ENCODE measurements at regions of chr19 and their contacts with region 1.

Region 1: DNA sequence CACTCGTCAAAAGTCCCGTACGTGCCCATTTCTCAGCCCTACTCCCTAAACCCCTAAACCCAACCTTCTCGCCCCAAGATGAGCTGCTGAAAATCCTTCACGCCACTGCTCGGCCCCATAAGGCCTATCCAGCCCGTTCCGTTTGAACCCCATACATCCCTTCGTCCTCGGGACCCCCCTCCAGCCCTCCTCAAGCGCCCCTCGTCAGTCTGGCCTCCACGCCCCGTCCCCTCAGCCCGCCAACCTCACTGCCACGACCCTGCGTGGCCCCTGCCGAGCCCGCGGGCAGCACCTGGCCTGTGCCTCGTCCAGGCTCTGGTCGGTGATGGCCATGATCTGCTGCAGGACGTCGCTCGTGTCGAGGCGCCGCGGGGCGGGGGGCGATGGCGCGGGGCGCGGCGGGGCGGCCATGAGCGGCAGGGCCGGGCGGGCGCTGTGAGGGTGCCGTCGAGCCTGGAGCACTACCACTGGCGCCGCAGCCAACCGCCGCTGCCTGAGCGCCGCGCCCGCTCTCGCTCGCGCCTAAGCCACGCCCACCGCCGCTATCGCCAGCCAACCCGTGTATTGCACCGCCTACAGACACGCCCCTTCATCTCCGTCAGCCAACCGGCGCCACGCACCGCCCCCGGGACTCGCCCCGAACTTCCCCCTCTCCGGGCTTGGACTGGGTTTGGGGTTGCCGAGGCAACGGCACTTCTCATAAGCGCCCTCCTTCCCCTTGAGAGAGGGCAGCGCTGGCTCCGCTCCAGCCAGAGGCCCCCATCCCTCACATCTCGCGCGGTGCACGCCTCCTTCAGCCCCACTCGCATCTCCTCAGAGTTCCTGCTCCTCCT is at the start of gene PBX4:
- DNase-seq: peak; percentile 99
- H3K4me3 Mint-ChIP-seq: peak within 1 kb of the TSS; percentile 94
- H3K27ac Mint-ChIP-seq: peak within 1 kb of the TSS; percentile 81
- H3K4me1 Mint-ChIP-seq: peaks cover 43% of the 10 kb centered on the region
- H3K27me3 Mint-ChIP-seq: no peaks in the 10 kb centered on the region
- total RNA-seq, gene PBX4: 44.9 to 45.7 TPM

Region 2: DNA sequence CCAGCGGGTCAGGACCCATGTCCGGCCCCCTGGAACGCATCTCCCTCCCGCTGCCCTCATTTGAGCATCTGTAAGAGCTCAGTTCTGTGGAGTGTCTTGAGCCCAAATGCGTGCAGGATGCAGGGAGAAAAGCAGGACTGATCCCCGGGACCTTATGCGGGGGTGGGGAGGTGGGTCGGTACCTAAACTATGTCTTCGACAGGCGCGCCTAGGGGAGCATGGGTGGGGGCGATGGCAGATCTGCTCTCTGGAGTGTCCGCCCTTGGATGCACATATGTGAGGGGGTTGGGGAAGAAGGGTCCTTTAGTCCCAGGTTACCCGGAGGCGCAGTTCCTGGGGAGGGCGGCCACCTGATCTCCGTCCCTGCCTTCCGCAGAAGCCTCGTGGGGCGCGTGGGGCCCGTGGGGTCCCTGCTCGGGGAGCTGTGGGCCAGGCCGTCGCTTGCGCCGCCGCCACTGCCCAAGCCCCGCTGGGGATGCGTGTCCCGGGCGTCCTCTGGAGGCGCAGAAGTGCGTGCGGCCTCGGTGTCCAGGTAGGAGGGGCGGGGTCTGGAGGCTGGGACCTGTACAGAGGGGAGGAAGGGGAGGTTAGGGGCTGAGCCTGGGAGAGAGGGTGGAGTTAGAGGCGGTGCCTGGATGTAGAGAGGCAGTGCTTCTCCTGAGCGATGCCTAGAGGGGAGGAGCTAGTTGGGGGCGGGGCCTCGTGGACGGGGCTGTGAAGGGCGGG is 77.6 kb before region 1 on chr19:
- CTCF ChIA-PET with region 1: no interaction called
- POLR2A ChIA-PET with region 1: no interaction called
- intact Hi-C with region 1: loop called (anchors 2 kb)
- DNase-seq: peak; percentile 91
- H3K4me3 Mint-ChIP-seq: peak overlapping the region; percentile 70
- H3K27ac Mint-ChIP-seq: no peak overlapping the region
- H3K4me1 Mint-ChIP-seq: peaks cover 26% of the 10 kb centered on the region
- H3K27me3 Mint-ChIP-seq: peaks cover 5% of the 10 kb centered on the region

Region 3: GRCh38 chr19:19591133-19591825 is 27.2 kb before region 1 on chr19:
- CTCF ChIA-PET with region 1: interaction called, 5 read pairs
- POLR2A ChIA-PET with region 1: interaction called, 5 read pairs
- intact Hi-C with region 1: loop called (anchors 2 kb)
- DNase-seq: peak; percentile 89
- H3K4me3 Mint-ChIP-seq: peak overlapping the region; percentile 60
- H3K27ac Mint-ChIP-seq: peak overlapping the region; percentile 100
- H3K4me1 Mint-ChIP-seq: peaks cover 72% of the 10 kb centered on the region
- H3K27me3 Mint-ChIP-seq: no peaks in the 10 kb centered on the region

Region 4: GRCh38 chr19:19597809-19598306 is 20.6 kb before region 1 on chr19:
- CTCF ChIA-PET with region 1: no interaction called
- POLR2A ChIA-PET with region 1: interaction called, 9 read pairs
- intact Hi-C with region 1: loop called (anchors 1 kb)
- DNase-seq: peak; percentile 74
- H3K4me3 Mint-ChIP-seq: peak overlapping the region; percentile 75
- H3K27ac Mint-ChIP-seq: peak overlapping the region; percentile 100
- H3K4me1 Mint-ChIP-seq: peaks cover 81% of the 10 kb centered on the region
- H3K27me3 Mint-ChIP-seq: no peaks in the 10 kb centered on the region

Region 5: GRCh38 chr19:19606021-19606420 is 12.4 kb before region 1 on chr19:
- CTCF ChIA-PET with region 1: no interaction called
- POLR2A ChIA-PET with region 1: interaction called, 9 read pairs
- intact Hi-C with region 1: loop called (anchors 1 kb)
- DNase-seq: peak; percentile 71
- H3K4me3 Mint-ChIP-seq: peak overlapping the region; percentile 10
- H3K27ac Mint-ChIP-seq: peak overlapping the region; percentile 88
- H3K4me1 Mint-ChIP-seq: peaks cover 58% of the 10 kb centered on the region
- H3K27me3 Mint-ChIP-seq: no peaks in the 10 kb centered on the region

Measured in activated CD4-positive, alpha-beta memory T cell treated with anti-CD3 and anti-CD28 coated beads for 36 hours (primary cell).